Esophagus muscularis mucosa (tissue), 4 donors: ENCODE measurements at regions of chr17 and their contacts with region 1.

Region 1: GRCh38 chr17:63621766-63622519 is at the start of gene MAP3K3:
- DNase-seq: peak; percentile 100
- H3K4me3 ChIP-seq: peak within 1 kb of the TSS; percentile 85 to 96 (median 88)
- H3K27ac ChIP-seq: peak within 1 kb of the TSS; percentile 85 to 91 (median 89)
- H3K4me1 ChIP-seq: peaks cover 37 to 44% (median 42%) of the 10 kb centered on the region in 4 donors
- H3K27me3 ChIP-seq: no peaks in the 10 kb centered on the region
- CTCF ChIP-seq: peak in 2 of 3 experiments; percentile 21 to 30
- EP300 ChIP-seq: no peak
- POLR2A ChIP-seq: no peak
- total RNA-seq, gene MAP3K3: 67.7 to 132 (median 86.6) TPM

Region 2: DNA sequence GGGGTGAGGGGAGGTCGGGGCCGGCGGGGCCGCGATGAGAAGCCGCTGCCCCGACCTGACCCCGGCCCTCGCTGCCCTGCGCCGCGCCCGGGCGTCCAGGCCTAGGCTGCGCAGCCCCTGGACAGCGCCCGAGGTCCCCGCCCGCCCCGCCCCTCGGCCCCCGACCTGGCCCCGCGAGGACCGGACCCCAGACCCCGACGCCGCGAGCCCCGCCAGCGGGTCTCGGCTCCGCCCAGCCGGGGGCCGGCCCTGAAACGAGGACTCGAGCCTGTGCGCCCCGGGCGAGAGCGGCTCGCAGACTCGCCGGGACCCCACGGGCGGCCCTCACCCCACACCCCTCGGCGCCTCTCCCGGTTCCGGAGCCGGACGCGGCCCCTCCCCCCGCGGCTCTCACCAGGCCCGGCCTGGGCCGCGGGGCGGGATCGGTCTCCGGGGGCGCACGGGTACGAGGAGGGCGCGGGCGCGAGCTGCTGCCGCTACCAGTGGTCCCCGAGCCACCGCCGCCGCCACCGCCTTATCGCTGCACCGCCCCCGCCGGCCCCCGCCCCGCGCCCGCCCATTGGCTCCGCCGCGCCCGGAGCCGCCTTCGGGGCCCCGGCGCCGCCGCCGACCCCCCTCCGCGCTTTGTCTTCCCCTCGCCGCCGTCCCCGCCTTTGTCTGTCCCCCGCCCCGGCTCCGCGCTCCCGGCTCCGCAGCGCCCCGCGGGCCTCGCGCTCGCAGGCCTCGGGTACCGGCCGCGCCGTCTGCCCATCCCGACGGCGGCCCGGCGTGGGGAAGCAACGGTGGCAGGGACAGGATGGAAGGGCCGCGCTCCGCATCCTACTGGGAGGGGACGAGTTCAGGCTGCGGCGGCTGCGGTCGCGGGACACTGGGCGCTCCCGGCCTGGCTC is 77.9 kb after region 1 on chr17 and contains the start of gene LIMD2:
- intact Hi-C with region 1: loop called (anchors 5 kb)
- DNase-seq: no peak
- H3K4me3 ChIP-seq: peak within 1 kb of the TSS; percentile 65 to 68 (median 66)
- H3K27ac ChIP-seq: peak within 1 kb of the TSS; percentile 67 to 83 (median 74)
- H3K4me1 ChIP-seq: peaks cover 20 to 61% (median 54%) of the 10 kb centered on the region in 4 donors
- H3K27me3 ChIP-seq: peaks cover 0 to 19% (median 0%) of the 10 kb centered on the region in 4 donors
- CTCF ChIP-seq: no peak
- EP300 ChIP-seq: no peak
- POLR2A ChIP-seq: no peak
- total RNA-seq, gene LIMD2: 3.1 to 14.9 (median 8.0) TPM